ENCODE measurements at regions of chr6 and their contacts with region 1.

Region 1: DNA sequence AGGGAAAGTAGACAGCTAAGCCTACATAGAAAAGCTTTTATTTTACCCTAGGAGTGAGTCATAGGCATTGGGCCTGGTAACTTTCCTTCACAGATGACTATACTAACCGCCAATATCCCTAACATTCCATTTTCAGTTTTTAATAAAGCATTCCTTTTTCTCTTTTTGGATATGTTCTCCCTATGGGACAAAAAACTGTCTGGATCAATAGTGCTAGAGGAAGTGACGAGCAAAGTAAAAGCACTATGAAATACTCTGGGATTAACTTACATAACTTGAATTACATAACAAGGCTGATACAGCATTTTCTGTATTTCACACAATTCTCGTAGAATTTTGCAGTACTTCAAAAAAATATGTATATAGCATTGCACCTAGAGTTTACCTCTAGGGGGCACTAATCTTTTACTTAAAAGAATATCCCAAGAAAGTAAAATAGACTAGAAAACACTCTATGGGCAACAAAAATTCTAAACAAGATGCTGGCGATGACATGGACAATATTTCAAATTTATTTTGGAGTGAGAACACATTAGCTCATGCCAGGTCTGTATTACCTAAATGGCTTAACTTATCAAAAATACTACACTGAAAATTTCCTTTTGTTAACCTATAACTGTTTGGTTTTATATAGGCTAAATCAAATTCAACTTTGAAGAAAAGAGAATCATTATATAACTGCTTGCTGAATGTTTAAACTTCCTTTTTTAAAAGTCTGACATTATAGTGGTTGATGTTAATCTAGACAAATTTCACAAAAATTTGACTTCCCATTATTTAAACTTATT is 66.3 kb upstream of the DST start:
- DNase-seq: peak; percentile 86
- H3K4me3 ChIP-seq: peak overlapping the region; percentile 63
- H3K27ac ChIP-seq: peak overlapping the region; percentile 70
- H3K4me1 ChIP-seq: peaks cover 52% of the 10 kb centered on the region
- H3K27me3 ChIP-seq: no peaks in the 10 kb centered on the region

Region 2: GRCh38 chr6:56499095-56499494 is 209.9 kb before region 1 on chr6:
- in situ Hi-C with region 1: no loop called
- DNase-seq: peak; percentile 23
- H3K4me3 ChIP-seq: no peak overlapping the region
- H3K27ac ChIP-seq: peak overlapping the region; percentile 21; the same call in 1 of the 2 replicates
- H3K4me1 ChIP-seq: no peaks in the 10 kb centered on the region
- H3K27me3 ChIP-seq: no peaks in the 10 kb centered on the region

Region 3: DNA sequence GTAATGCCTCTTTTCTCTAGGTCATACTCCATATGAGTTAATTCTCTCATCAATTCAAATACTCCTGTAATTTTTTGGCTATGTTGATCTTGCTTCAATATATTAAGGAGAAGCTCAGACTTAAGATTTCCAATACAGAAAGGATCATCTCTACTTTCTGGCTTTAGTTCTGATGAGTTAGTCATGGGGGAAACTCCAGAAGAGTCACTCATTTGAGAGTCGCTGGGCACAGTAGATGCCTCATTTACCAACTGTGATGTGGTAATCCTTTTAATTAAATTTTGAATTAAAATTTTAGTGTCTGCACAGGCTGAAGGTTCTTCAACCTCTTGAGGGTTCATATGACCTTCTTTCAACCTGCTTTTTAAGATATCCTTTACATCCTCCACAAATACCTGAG is 104.8 kb before region 1 on chr6:
- in situ Hi-C with region 1: no loop called
- DNase-seq: peak; percentile 61
- H3K4me3 ChIP-seq: no peak overlapping the region
- H3K27ac ChIP-seq: peak overlapping the region; percentile 22
- H3K4me1 ChIP-seq: peaks cover 6% of the 10 kb centered on the region; the same call in 1 of the 2 replicates
- H3K27me3 ChIP-seq: no peaks in the 10 kb centered on the region

Region 4: GRCh38 chr6:56843573-56844349 is 134.8 kb after region 1 on chr6:
- in situ Hi-C with region 1: loop called (anchors 25 kb)
- DNase-seq: peak; percentile 93
- H3K4me3 ChIP-seq: peak overlapping the region; percentile 95
- H3K27ac ChIP-seq: peak overlapping the region; percentile 71
- H3K4me1 ChIP-seq: peaks cover 38% of the 10 kb centered on the region
- H3K27me3 ChIP-seq: no peaks in the 10 kb centered on the region